CD4-positive, alpha-beta T cell (primary cell): ENCODE measurements at regions of chr4 and their contacts with region 1.

Region 1: GRCh38 chr4:2241410-2242353 is at the starts of genes HAUS3 and POLN:
- DNase-seq: peak; percentile 98 to 100 (median 99)
- ATAC-seq: peak; percentile 87
- H3K4me3 ChIP-seq: peak within 1 kb of the TSS; percentile 95
- H3K4me3 Mint-ChIP-seq: peak within 1 kb of the TSS; percentile 92
- H3K27ac ChIP-seq: peak within 1 kb of the TSS; percentile 84 to 88
- H3K27ac Mint-ChIP-seq: peak within 1 kb of the TSS; percentile 95
- H3K4me1 ChIP-seq: peaks cover 30% of the 10 kb centered on the region
- H3K4me1 Mint-ChIP-seq: peaks cover 70% of the 10 kb centered on the region
- H3K27me3 ChIP-seq: no peaks in the 10 kb centered on the region
- H3K27me3 Mint-ChIP-seq: no peaks in the 10 kb centered on the region
- CTCF ChIP-seq: no peak
- total RNA-seq, gene HAUS3: 143 to 148 TPM
- total RNA-seq, gene POLN: 2.1 to 2.3 TPM

Region 2: DNA sequence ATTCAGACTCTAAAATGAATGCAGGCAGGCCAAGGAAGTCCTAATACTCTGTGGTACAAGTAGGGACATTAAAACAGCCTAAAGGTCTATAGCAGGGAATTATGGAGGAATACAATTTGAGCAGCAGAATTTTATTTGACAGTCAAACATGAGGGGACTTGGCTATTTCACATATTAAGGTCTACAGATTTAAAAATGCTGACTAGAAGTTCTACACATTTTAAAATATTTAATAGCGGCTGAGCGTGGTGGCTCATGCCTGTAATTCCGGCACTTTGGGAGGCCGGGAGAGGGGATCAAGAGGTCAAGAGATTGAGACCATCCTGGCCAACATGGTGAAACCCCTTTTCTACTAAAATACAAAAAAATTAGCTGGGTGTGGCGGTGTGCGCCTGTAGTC is 10.6 kb before region 1 on chr4:
- CTCF ChIA-PET with region 1: interaction called, 3 read pairs
- POLR2A ChIA-PET with region 1: interaction called, 11 read pairs
- intact Hi-C with region 1: no loop called
- DNase-seq: no peak
- ATAC-seq: no peak
- H3K4me3 ChIP-seq: no peak overlapping the region
- H3K4me3 Mint-ChIP-seq: no peak overlapping the region
- H3K27ac ChIP-seq: no peak overlapping the region
- H3K27ac Mint-ChIP-seq: no peak overlapping the region
- H3K4me1 ChIP-seq: no peaks in the 10 kb centered on the region
- H3K4me1 Mint-ChIP-seq: peaks cover 30% of the 10 kb centered on the region
- H3K27me3 ChIP-seq: no peaks in the 10 kb centered on the region
- H3K27me3 Mint-ChIP-seq: no peaks in the 10 kb centered on the region
- CTCF ChIP-seq: no peak

Region 3: GRCh38 chr4:2290974-2291704 is 49.5 kb after region 1 on chr4:
- CTCF ChIA-PET with region 1: no interaction called
- POLR2A ChIA-PET with region 1: interaction called, 11 read pairs
- intact Hi-C with region 1: no loop called
- DNase-seq: peak; percentile 68 to 95 (median 77)
- ATAC-seq: peak; percentile 94
- H3K4me3 ChIP-seq: peak overlapping the region; percentile 19
- H3K4me3 Mint-ChIP-seq: peak overlapping the region; percentile 90
- H3K27ac ChIP-seq: peak overlapping the region; percentile 85 to 91
- H3K27ac Mint-ChIP-seq: peak overlapping the region; percentile 100
- H3K4me1 ChIP-seq: peaks cover 60% of the 10 kb centered on the region
- H3K4me1 Mint-ChIP-seq: peaks cover 56% of the 10 kb centered on the region
- H3K27me3 ChIP-seq: no peaks in the 10 kb centered on the region
- H3K27me3 Mint-ChIP-seq: no peaks in the 10 kb centered on the region
- CTCF ChIP-seq: no peak

Region 4: DNA sequence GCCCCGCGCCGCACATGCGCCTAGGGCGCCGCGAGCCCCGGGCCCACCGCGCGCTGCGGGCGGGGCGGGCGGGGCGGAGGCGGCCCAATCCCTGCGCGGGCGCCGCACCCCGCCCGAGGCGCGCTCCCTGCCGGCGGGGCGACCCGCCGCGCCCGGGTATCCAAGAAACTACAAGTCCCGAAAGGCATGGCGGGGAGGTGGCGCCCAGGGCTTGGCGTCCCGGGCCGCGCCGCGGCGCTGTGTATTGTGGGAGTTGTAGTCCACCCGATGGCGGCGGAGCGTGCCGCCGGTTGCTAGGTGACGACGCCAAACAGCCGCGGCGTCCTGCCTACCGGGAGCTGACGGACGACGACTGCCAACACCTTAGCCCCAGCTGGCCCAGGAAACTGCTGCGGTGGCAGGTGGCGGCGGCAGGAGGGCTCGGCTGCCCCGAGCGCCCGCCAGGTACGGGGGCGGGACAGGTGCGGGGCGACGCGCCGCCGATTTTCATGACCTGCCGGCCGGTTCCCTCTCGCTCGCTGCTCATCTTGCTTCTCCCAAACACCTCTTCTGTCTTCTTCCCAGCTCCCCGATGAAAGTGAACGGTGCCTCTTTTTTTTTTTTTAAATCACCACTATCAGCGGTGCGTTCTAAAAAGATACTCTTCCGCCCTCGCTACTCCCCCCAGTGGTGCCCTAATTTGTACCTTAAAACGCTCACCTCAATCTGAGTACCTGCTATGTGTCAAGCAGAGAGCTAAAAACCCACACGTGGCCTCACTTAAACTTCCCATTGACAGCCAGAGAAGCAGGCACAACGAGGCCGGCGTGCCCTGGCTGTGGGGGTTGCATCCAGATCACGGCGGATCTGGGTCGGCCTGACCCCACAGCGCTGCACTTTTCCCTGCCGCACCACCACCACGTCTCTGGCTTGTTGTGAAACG is 177.2 kb after region 1 on chr4 and contains the start of gene CFAP99:
- CTCF ChIA-PET with region 1: interaction called, 21 read pairs
- POLR2A ChIA-PET with region 1: interaction called, 21 read pairs
- intact Hi-C with region 1: loop called in 1 of 2 experiments (anchors 2 kb)
- DNase-seq: peak; percentile 98 to 99 (median 99)
- ATAC-seq: peak; percentile 86
- H3K4me3 ChIP-seq: peak within 1 kb of the TSS; percentile 75
- H3K4me3 Mint-ChIP-seq: peak within 1 kb of the TSS; percentile 91
- H3K27ac ChIP-seq: peak within 1 kb of the TSS; percentile 43 to 88
- H3K27ac Mint-ChIP-seq: peak within 1 kb of the TSS; percentile 80
- H3K4me1 ChIP-seq: peaks cover 49% of the 10 kb centered on the region
- H3K4me1 Mint-ChIP-seq: peaks cover 39% of the 10 kb centered on the region
- H3K27me3 ChIP-seq: peaks cover 9 to 11% of the 10 kb centered on the region in 2 experiments
- H3K27me3 Mint-ChIP-seq: peaks cover 31% of the 10 kb centered on the region
- CTCF ChIP-seq: peak; percentile 52
- total RNA-seq, gene CFAP99: 0.17 TPM in 1 of 2 experiments, not detected in the other

Region 5: DNA sequence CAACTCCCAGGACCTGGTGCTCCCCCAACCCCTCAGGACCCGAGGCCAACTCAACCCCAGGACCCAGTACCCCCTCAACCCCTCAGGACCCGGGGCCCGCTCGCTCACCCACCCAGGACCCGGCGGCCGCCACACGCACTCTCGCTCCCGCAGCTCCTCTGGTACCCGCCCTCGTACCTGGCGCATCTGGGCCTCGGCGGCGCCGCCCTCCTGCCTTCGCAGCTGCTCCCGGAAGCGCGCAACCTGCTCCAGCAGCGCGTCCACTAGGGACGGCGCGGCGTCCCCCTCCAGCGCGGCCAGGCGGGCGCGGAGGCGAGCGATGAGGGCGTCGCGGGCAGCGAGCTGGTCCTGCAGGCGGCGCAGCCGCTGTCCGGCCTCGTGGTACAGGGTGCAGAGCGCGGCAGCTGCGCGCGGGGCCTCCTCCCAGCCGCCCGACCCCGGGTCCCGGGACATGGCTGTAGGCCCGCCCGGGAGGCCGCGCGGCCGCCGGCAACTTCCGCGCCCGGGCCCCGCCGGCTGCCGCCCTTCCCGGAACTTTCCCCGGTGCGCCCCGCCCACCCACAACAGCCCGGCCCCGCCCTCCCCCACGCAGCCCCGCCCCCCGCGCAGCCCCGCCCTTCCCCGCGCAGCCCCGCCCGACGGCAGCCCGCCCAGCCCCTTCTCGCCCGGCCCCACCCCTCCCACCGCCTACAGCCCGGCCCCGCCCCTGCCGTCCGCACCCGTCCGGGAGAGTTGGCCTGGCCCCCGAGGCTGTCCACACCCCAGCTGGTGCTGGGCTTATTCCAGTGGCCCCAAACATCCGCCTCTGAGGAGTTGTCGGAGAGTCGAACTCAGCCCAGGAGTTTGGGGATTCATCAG is 514.4 kb after region 1 on chr4 and contains the start of gene TNIP2:
- CTCF ChIA-PET with region 1: no interaction called
- POLR2A ChIA-PET with region 1: no interaction called
- intact Hi-C with region 1: loop called in 1 of 2 experiments (anchors 5 kb)
- DNase-seq: peak; percentile 63 to 91 (median 76)
- ATAC-seq: peak; percentile 78
- H3K4me3 ChIP-seq: peak within 1 kb of the TSS; percentile 68
- H3K4me3 Mint-ChIP-seq: peak within 1 kb of the TSS; percentile 90
- H3K27ac ChIP-seq: peak within 1 kb of the TSS; percentile 29 to 56
- H3K27ac Mint-ChIP-seq: peak within 1 kb of the TSS; percentile 73
- H3K4me1 ChIP-seq: peaks cover 33% of the 10 kb centered on the region
- H3K4me1 Mint-ChIP-seq: peaks cover 31% of the 10 kb centered on the region
- H3K27me3 ChIP-seq: no peaks in the 10 kb centered on the region
- H3K27me3 Mint-ChIP-seq: no peaks in the 10 kb centered on the region
- CTCF ChIP-seq: no peak
- total RNA-seq, gene TNIP2: 43.8 to 49.1 TPM

Region 6: GRCh38 chr4:3531879-3532713 is 1290.4 kb after region 1 on chr4 and contains the start of gene LRPAP1:
- CTCF ChIA-PET with region 1: no interaction called
- POLR2A ChIA-PET with region 1: no interaction called
- intact Hi-C with region 1: loop called in 1 of 2 experiments (anchors 10 kb)
- DNase-seq: peak; percentile 59 to 94 (median 80)
- ATAC-seq: peak; percentile 91
- H3K4me3 ChIP-seq: peak within 1 kb of the TSS; percentile 85
- H3K4me3 Mint-ChIP-seq: peak within 1 kb of the TSS; percentile 100
- H3K27ac ChIP-seq: no peak within 1 kb of the TSS
- H3K27ac Mint-ChIP-seq: peak within 1 kb of the TSS; percentile 94
- H3K4me1 ChIP-seq: peaks cover 52% of the 10 kb centered on the region
- H3K4me1 Mint-ChIP-seq: peaks cover 36% of the 10 kb centered on the region
- H3K27me3 ChIP-seq: no peaks in the 10 kb centered on the region
- H3K27me3 Mint-ChIP-seq: no peaks in the 10 kb centered on the region
- CTCF ChIP-seq: no peak
- total RNA-seq, gene LRPAP1: 84.2 to 88.0 TPM